B cell (primary cell): ENCODE measurements at regions of chr10 and their contacts with region 1.

Region 1: GRCh38 chr10:113802997-113803396 is 50.9 kb downstream of the DCLRE1A start:
- DNase-seq: peak; percentile 12
- ATAC-seq: no peak
- H3K4me3 ChIP-seq: no peak overlapping the region
- H3K4me3 Mint-ChIP-seq: no peak overlapping the region
- H3K27ac ChIP-seq: no peak overlapping the region
- H3K27ac Mint-ChIP-seq: no peak overlapping the region
- H3K4me1 ChIP-seq: peaks cover 3 to 5% of the 10 kb centered on the region in 2 donors
- H3K4me1 Mint-ChIP-seq: peaks cover 4% of the 10 kb centered on the region
- H3K27me3 ChIP-seq: peaks cover 0 to 3% (median 0%) of the 10 kb centered on the region in 4 experiments
- H3K27me3 Mint-ChIP-seq: peaks cover 10% of the 10 kb centered on the region
- CTCF ChIP-seq: no peak

Region 2: GRCh38 chr10:113527211-113527906 is 275.6 kb before region 1 on chr10:
- CTCF ChIA-PET with region 1: no interaction called
- POLR2A ChIA-PET with region 1: no interaction called
- intact Hi-C with region 1: no loop called
- DNase-seq: no peak
- ATAC-seq: no peak
- H3K4me3 ChIP-seq: no peak overlapping the region
- H3K4me3 Mint-ChIP-seq: no peak overlapping the region
- H3K27ac ChIP-seq: no peak overlapping the region
- H3K27ac Mint-ChIP-seq: no peak overlapping the region
- H3K4me1 ChIP-seq: no peaks in the 10 kb centered on the region
- H3K4me1 Mint-ChIP-seq: no peaks in the 10 kb centered on the region
- H3K27me3 ChIP-seq: no peaks in the 10 kb centered on the region
- H3K27me3 Mint-ChIP-seq: peaks cover 5% of the 10 kb centered on the region
- CTCF ChIP-seq: no peak

Region 3: GRCh38 chr10:113843972-113844485 is 41.0 kb after region 1 on chr10:
- CTCF ChIA-PET with region 1: interaction called, 3 read pairs
- POLR2A ChIA-PET with region 1: no interaction called
- intact Hi-C with region 1: loop called (anchors 5 kb)
- DNase-seq: no peak
- ATAC-seq: no peak
- H3K4me3 ChIP-seq: no peak overlapping the region
- H3K4me3 Mint-ChIP-seq: no peak overlapping the region
- H3K27ac ChIP-seq: no peak overlapping the region
- H3K27ac Mint-ChIP-seq: no peak overlapping the region
- H3K4me1 ChIP-seq: peaks cover 4% of the 10 kb centered on the region in 2 donors
- H3K4me1 Mint-ChIP-seq: peaks cover 10% of the 10 kb centered on the region
- H3K27me3 ChIP-seq: no peaks in the 10 kb centered on the region
- H3K27me3 Mint-ChIP-seq: no peaks in the 10 kb centered on the region
- CTCF ChIP-seq: no peak

Region 4: GRCh38 chr10:114110174-114110972 is 307.4 kb after region 1 on chr10:
- CTCF ChIA-PET with region 1: interaction called, 242 read pairs
- POLR2A ChIA-PET with region 1: no interaction called
- intact Hi-C with region 1: no loop called
- DNase-seq: no peak
- ATAC-seq: no peak
- H3K4me3 ChIP-seq: no peak overlapping the region
- H3K4me3 Mint-ChIP-seq: no peak overlapping the region
- H3K27ac ChIP-seq: no peak overlapping the region
- H3K27ac Mint-ChIP-seq: no peak overlapping the region
- H3K4me1 ChIP-seq: peaks cover 9 to 10% of the 10 kb centered on the region in 2 donors
- H3K4me1 Mint-ChIP-seq: peaks cover 13% of the 10 kb centered on the region
- H3K27me3 ChIP-seq: no peaks in the 10 kb centered on the region
- H3K27me3 Mint-ChIP-seq: peaks cover 7% of the 10 kb centered on the region
- CTCF ChIP-seq: no peak

Region 5: GRCh38 chr10:114239117-114239993 is 436.4 kb after region 1 on chr10 and contains the start of gene VWA2:
- CTCF ChIA-PET with region 1: no interaction called
- POLR2A ChIA-PET with region 1: no interaction called
- intact Hi-C with region 1: loop called (anchors 10 kb)
- DNase-seq: peak; percentile 43
- ATAC-seq: peak; percentile 51
- H3K4me3 ChIP-seq: peak within 1 kb of the TSS; percentile 4 to 46 (median 32)
- H3K4me3 Mint-ChIP-seq: peak within 1 kb of the TSS; percentile 70
- H3K27ac ChIP-seq: no peak within 1 kb of the TSS
- H3K27ac Mint-ChIP-seq: no peak within 1 kb of the TSS
- H3K4me1 ChIP-seq: peaks cover 10% of the 10 kb centered on the region in 2 donors
- H3K4me1 Mint-ChIP-seq: peaks cover 11% of the 10 kb centered on the region
- H3K27me3 ChIP-seq: peaks cover 0 to 39% (median 22%) of the 10 kb centered on the region in 4 experiments
- H3K27me3 Mint-ChIP-seq: peaks cover 62% of the 10 kb centered on the region
- CTCF ChIP-seq: no peak
- total RNA-seq, gene VWA2: not detected in 2 replicates